ENCODE measurements at regions of chr13 and their contacts with region 1.

Region 1: DNA sequence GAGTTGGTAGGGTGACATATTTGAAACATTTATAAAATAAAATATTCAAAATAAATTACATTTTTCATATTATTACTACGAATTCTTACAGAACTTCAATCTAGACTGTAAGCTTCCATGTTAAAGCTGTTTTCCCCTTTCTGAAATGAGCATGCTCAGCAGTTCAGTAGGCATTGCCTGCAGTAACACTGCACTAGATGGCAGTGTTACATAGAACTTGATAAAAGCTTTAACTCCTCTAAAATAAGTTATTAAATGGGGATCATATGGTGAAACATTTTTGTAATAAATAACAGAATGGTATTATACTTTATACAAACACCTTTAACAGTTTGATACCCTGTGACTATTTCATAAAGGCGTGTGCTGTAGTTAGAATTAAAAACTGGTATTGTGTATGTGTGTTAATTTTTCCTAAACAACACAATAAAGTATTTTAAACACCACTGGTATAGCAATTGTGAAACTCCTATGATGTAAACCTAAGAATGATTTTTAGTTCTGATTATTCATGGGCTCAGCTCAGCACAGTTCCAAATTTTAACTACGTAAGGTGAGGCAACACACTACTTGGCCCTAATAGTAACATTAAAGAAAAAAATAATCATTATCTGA is 11.6 kb upstream of the GPR18 start:
- DNase-seq: peak; percentile 76 to 86 (median 86)
- H3K4me3 ChIP-seq: no peak overlapping the region
- H3K27ac ChIP-seq: peak overlapping the region in 1 of 2 experiments; percentile 3
- H3K4me1 ChIP-seq: peaks cover 3 to 26% (median 11%) of the 10 kb centered on the region in 4 experiments
- H3K27me3 ChIP-seq: no peaks in the 10 kb centered on the region

Region 2: GRCh38 chr13:98978280-98978679 is 291.5 kb before region 1 on chr13:
- CTCF ChIA-PET with region 1: no interaction called
- POLR2A ChIA-PET with region 1: no interaction called
- DNase-seq: peak; percentile 50 to 76 (median 68)
- H3K4me3 ChIP-seq: no peak overlapping the region
- H3K27ac ChIP-seq: no peak overlapping the region
- H3K4me1 ChIP-seq: peaks cover 6 to 64% (median 50%) of the 10 kb centered on the region in 4 experiments
- H3K27me3 ChIP-seq: no peaks in the 10 kb centered on the region

Region 3: GRCh38 chr13:99192480-99192879 is 77.3 kb before region 1 on chr13:
- CTCF ChIA-PET with region 1: interaction called, 181 read pairs
- POLR2A ChIA-PET with region 1: no interaction called
- DNase-seq: no peak
- H3K4me3 ChIP-seq: no peak overlapping the region
- H3K27ac ChIP-seq: no peak overlapping the region
- H3K4me1 ChIP-seq: peaks cover 0 to 3% (median 0%) of the 10 kb centered on the region in 4 experiments
- H3K27me3 ChIP-seq: no peaks in the 10 kb centered on the region

Region 4: GRCh38 chr13:99258946-99259345 is 10.8 kb before region 1 on chr13:
- CTCF ChIA-PET with region 1: interaction called, 23 read pairs
- POLR2A ChIA-PET with region 1: interaction called, 3 read pairs
- DNase-seq: peak; percentile 41 to 85 (median 77)
- H3K4me3 ChIP-seq: peak overlapping the region in 6 of 7 experiments; percentile 11 to 63 (median 20)
- H3K27ac ChIP-seq: peak overlapping the region; percentile 41 to 67
- H3K4me1 ChIP-seq: peaks cover 21 to 44% (median 27%) of the 10 kb centered on the region in 4 experiments
- H3K27me3 ChIP-seq: no peaks in the 10 kb centered on the region

Region 5: GRCh38 chr13:99322297-99323103 is 52.8 kb after region 1 on chr13:
- CTCF ChIA-PET with region 1: interaction called, 13 read pairs
- POLR2A ChIA-PET with region 1: no interaction called
- DNase-seq: peak; percentile 78 to 95 (median 92)
- H3K4me3 ChIP-seq: peak overlapping the region in 1 of 7 experiments; percentile 37
- H3K27ac ChIP-seq: peak overlapping the region; percentile 67 to 87
- H3K4me1 ChIP-seq: peaks cover 27 to 54% (median 37%) of the 10 kb centered on the region in 4 experiments
- H3K27me3 ChIP-seq: no peaks in the 10 kb centered on the region

Region 6: DNA sequence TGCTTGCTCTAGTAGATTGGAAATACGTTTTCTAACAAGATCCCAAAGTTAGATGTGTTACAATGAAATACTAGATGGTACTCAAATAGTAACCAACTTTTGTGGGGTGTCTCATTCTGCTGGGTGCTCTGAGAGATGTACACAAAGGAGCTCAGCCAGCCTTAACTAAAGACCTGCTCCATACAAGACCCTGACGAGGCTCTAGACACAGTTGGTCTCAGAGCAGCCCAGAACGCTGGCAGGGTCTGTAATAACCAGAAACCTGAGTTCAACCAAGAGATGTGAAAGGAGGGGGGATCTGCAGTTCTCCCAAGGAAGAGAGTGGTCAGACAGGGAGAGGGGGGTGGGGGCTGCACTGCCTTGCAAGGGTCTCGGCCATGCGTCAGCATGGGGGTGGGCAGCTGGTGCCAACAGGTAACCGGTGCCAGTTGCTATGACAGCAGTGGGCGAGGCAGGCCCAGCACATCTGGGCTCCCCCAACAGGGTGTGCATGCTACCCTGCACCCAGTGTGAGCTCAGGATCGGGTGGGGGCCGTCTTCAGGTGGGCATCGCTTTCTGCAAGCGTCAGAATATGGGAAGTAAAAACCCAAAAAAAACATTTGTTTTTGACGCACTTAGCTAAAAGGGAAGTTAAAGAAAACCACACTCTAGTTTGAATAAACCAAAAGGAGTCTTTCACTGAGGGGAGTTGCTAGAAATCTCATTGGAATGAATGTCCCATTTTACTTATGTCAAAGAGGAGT is 105.4 kb after region 1 on chr13:
- CTCF ChIA-PET with region 1: interaction called, 47 read pairs
- POLR2A ChIA-PET with region 1: no interaction called
- DNase-seq: peak; percentile 85 to 96 (median 93)
- H3K4me3 ChIP-seq: peak overlapping the region in 3 of 7 experiments; percentile 18 to 53 (median 50)
- H3K27ac ChIP-seq: peak overlapping the region; percentile 64 to 76
- H3K4me1 ChIP-seq: peaks cover 4 to 35% (median 32%) of the 10 kb centered on the region in 4 experiments
- H3K27me3 ChIP-seq: no peaks in the 10 kb centered on the region

Region 7: GRCh38 chr13:99425485-99426341 is 156.0 kb after region 1 on chr13:
- CTCF ChIA-PET with region 1: interaction called, 15 read pairs
- POLR2A ChIA-PET with region 1: no interaction called
- DNase-seq: peak in 2 of 3 donors; percentile 52 to 62
- H3K4me3 ChIP-seq: peak overlapping the region in 4 of 7 experiments; percentile 6 to 35 (median 16)
- H3K27ac ChIP-seq: no peak overlapping the region
- H3K4me1 ChIP-seq: peaks cover 6 to 38% (median 29%) of the 10 kb centered on the region in 4 experiments
- H3K27me3 ChIP-seq: no peaks in the 10 kb centered on the region

Measured in common myeloid progenitor, CD34-positive (primary cell).